Naive thymus-derived CD4-positive, alpha-beta T cell (primary cell): ENCODE measurements at regions of chr1 and their contacts with region 1.

Region 1: DNA sequence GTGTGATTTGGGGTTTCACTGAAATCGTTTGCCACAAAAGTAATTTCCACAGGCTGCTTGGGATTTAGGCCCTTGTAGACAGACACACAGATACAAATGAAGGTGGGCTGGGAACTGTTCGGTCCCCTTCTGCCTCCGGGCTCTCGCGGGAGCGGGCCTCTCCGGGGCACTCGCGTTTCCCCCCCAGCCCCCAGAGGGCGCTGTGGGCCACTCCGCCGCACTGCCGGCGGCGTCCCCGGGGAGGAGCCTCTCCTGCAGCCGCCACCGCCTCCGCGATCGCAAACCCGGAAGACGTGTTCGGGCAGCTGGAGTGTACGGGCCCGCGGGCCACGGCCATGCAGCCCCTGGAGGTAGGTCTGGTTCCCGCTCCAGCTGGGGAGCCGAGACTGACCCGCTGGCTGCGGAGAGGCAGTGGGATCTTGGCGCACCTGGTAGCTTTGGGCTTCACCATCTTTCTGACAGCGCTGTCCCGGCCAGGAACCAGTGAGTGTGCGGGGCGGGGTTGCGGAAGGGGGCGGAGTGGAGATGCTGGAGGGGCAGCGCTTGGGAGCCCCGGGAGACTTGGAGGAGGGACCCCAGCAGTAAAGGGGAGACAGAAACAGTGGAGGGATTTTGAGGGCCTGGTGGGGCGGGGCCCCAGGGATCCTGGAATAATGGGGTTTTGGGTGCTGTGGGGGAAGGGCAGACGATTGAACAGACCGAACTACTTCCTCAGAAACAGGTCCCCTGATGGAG is at the start of gene CYB561D1:
- DNase-seq: peak; percentile 83 to 97 (median 91)
- ATAC-seq: peak; percentile 96
- H3K4me3 ChIP-seq: peak within 1 kb of the TSS; percentile 96
- H3K4me3 Mint-ChIP-seq: peak within 1 kb of the TSS; percentile 90 to 98 (median 94)
- H3K27ac ChIP-seq: peak within 1 kb of the TSS; percentile 72
- H3K27ac Mint-ChIP-seq: peak within 1 kb of the TSS; percentile 84 to 98 (median 92)
- H3K4me1 ChIP-seq: peaks cover 31 to 59% of the 10 kb centered on the region in 2 donors
- H3K4me1 Mint-ChIP-seq: peaks cover 40 to 59% (median 53%) of the 10 kb centered on the region in 7 donors
- H3K27me3 ChIP-seq: no peaks in the 10 kb centered on the region
- H3K27me3 Mint-ChIP-seq: no peaks in the 10 kb centered on the region
- total RNA-seq, gene CYB561D1: 19.6 to 41.5 (median 24.1) TPM

Region 2: GRCh38 chr1:109075531-109076490 is 418.2 kb before region 1 on chr1 and contains the start of gene TAF13:
- CTCF ChIA-PET with region 1: no interaction called
- POLR2A ChIA-PET with region 1: no interaction called
- intact Hi-C with region 1: no loop called
- DNase-seq: peak; percentile 75 to 89 (median 84)
- ATAC-seq: peak; percentile 100
- H3K4me3 ChIP-seq: peak within 1 kb of the TSS; percentile 80
- H3K4me3 Mint-ChIP-seq: peak within 1 kb of the TSS; percentile 89 to 99 (median 98)
- H3K27ac ChIP-seq: peak within 1 kb of the TSS; percentile 92
- H3K27ac Mint-ChIP-seq: peak within 1 kb of the TSS; percentile 95 to 100 (median 99)
- H3K4me1 ChIP-seq: peaks cover 5 to 8% of the 10 kb centered on the region in 2 donors
- H3K4me1 Mint-ChIP-seq: peaks cover 13 to 28% (median 20%) of the 10 kb centered on the region in 7 donors
- H3K27me3 ChIP-seq: no peaks in the 10 kb centered on the region
- H3K27me3 Mint-ChIP-seq: no peaks in the 10 kb centered on the region
- total RNA-seq, gene TAF13: 11.0 to 23.6 (median 17.6) TPM

Region 3: GRCh38 chr1:109468903-109469302 is 25.1 kb before region 1 on chr1:
- CTCF ChIA-PET with region 1: no interaction called
- POLR2A ChIA-PET with region 1: no interaction called
- intact Hi-C with region 1: no loop called
- DNase-seq: no peak
- ATAC-seq: no peak
- H3K4me3 ChIP-seq: no peak overlapping the region
- H3K4me3 Mint-ChIP-seq: no peak overlapping the region
- H3K27ac ChIP-seq: no peak overlapping the region
- H3K27ac Mint-ChIP-seq: no peak overlapping the region
- H3K4me1 ChIP-seq: peaks cover 0 to 3% of the 10 kb centered on the region in 2 donors
- H3K4me1 Mint-ChIP-seq: peaks cover 0 to 11% (median 7%) of the 10 kb centered on the region in 7 donors
- H3K27me3 ChIP-seq: peaks cover 15 to 16% of the 10 kb centered on the region in 2 donors
- H3K27me3 Mint-ChIP-seq: peaks cover 66 to 87% (median 73%) of the 10 kb centered on the region in 5 donors

Region 4: GRCh38 chr1:109509176-109510134 is 15.5 kb after region 1 on chr1 and contains the start of gene AMIGO1:
- CTCF ChIA-PET with region 1: interaction called, 417 read pairs
- POLR2A ChIA-PET with region 1: interaction called, 478 read pairs
- intact Hi-C with region 1: loop called in 1 of 2 experiments (anchors 1 kb)
- DNase-seq: peak; percentile 61 to 76 (median 71)
- ATAC-seq: peak; percentile 88
- H3K4me3 ChIP-seq: peak within 1 kb of the TSS; percentile 75
- H3K4me3 Mint-ChIP-seq: peak within 1 kb of the TSS; percentile 91 to 97 (median 96)
- H3K27ac ChIP-seq: peak within 1 kb of the TSS; percentile 81
- H3K27ac Mint-ChIP-seq: peak within 1 kb of the TSS in 8 of 9 donors; percentile 94 to 99 (median 98)
- H3K4me1 ChIP-seq: peaks cover 22 to 58% of the 10 kb centered on the region in 2 donors
- H3K4me1 Mint-ChIP-seq: peaks cover 37 to 75% (median 68%) of the 10 kb centered on the region in 7 donors
- H3K27me3 ChIP-seq: no peaks in the 10 kb centered on the region
- H3K27me3 Mint-ChIP-seq: peaks cover 0 to 47% (median 0%) of the 10 kb centered on the region in 5 donors
- total RNA-seq, gene AMIGO1: 2.9 to 42.2 (median 17.7) TPM

Region 5: GRCh38 chr1:109793089-109793485 is 299.1 kb after region 1 on chr1:
- CTCF ChIA-PET with region 1: no interaction called
- POLR2A ChIA-PET with region 1: no interaction called
- intact Hi-C with region 1: no loop called
- DNase-seq: no peak
- ATAC-seq: no peak
- H3K4me3 ChIP-seq: no peak overlapping the region
- H3K4me3 Mint-ChIP-seq: peak overlapping the region in 1 of 10 donors; percentile 17
- H3K27ac ChIP-seq: no peak overlapping the region
- H3K27ac Mint-ChIP-seq: peak overlapping the region in 7 of 9 donors; percentile 12 to 76 (median 59)
- H3K4me1 ChIP-seq: peaks cover 55 to 66% of the 10 kb centered on the region in 2 donors
- H3K4me1 Mint-ChIP-seq: peaks cover 47 to 88% (median 74%) of the 10 kb centered on the region in 7 donors
- H3K27me3 ChIP-seq: no peaks in the 10 kb centered on the region
- H3K27me3 Mint-ChIP-seq: no peaks in the 10 kb centered on the region